ENCODE measurements at regions of chr11 and their contacts with region 1.

Region 1: DNA sequence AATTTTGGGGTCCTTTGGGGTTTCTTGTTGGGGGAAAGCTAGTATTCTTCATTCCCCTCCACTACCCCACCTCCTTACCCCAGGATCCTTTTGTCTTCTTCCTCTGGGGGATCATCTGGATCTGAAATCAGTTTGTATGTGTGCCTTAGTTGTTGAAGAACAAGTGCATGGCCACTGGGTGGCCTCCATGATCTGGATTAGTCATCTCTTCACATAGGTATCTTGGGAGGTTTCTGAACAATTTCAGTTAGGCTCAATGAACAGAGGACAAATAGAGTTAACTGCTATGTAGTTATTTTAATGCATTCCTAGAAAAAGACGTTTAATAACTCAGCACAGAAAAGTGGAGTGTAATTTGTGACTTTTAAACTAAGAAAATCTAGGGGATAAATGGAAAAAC is 7.1 kb upstream of the VWA5A start:
- DNase-seq: no peak
- H3K4me3 ChIP-seq: no peak overlapping the region
- H3K27ac ChIP-seq: no peak overlapping the region
- H3K4me1 ChIP-seq: no peaks in the 10 kb centered on the region
- H3K27me3 ChIP-seq: no peaks in the 10 kb centered on the region
- CTCF ChIP-seq: peak; percentile 16

Region 2: DNA sequence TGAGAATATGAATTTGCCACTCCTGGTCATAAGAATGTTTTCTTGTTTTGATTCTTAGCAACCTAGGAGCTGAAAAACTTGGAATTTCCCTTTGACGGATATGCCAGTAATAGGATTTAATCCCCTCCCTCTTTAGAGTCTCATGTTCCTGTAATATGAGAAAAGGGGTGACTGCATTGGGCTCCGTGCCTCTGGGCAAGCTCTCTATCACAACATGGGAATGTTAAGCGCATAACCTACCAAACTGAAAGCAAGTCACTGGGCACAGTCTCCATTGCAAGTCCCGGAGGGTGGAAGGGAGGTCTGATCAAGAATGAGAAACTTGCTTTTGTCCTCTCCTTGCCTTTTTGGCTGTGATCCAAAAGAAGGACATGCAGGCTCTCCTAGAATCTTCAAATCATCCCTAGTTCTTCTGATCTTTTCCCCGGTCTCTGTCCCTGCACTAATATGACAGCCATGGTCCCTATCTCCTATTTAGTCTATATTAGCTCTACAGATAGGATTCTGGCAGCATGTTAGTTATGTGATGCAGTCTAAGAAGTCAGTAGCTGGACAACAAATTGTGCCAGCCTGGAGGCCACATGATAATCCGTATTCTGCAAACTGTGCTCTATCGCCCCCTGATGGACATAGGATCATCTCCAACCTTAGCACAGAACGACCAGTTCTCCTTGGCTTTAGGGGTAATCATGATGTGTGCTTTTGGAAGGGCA is 86.7 kb after region 1 on chr11:
- intact Hi-C with region 1: loop called (anchors 10 kb)
- DNase-seq: peak; percentile 75
- H3K4me3 ChIP-seq: no peak overlapping the region
- H3K27ac ChIP-seq: no peak overlapping the region
- H3K4me1 ChIP-seq: no peaks in the 10 kb centered on the region
- H3K27me3 ChIP-seq: no peaks in the 10 kb centered on the region
- CTCF ChIP-seq: peak; percentile 73

Region 3: DNA sequence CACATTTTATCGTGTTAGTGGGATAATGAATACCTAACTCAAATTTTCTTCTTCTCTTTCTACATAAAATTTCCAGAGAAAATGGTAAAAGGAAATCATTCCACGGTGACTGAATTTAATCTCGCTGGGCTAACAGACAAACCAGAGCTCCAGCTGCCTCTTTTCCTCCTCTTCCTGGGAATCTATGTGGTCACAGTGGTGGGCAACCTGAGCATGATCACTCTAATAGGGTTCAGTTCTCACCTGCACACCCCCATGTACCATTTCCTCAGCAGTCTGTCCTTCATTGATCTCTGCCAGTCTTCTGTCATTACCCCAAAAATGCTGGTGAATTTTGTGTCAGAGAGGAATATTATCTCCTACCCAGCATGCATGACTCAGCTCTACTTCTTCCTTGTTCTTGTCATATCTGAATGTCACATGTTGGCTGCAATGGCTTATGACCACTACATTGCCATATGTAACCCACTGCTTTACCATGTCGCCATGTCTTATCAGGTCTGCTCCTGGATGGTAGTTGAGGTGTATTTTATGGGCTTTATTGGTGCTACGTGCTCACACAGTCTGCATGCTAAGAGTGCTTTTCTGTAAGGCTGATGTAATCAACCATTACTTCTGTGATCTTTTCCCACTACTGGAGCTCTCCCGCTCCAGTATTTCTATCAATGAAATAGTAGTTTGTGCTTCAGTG is 99.1 kb after region 1 on chr11:
- intact Hi-C with region 1: no loop called
- DNase-seq: no peak
- H3K4me3 ChIP-seq: no peak overlapping the region
- H3K27ac ChIP-seq: no peak overlapping the region
- H3K4me1 ChIP-seq: no peaks in the 10 kb centered on the region
- H3K27me3 ChIP-seq: no peaks in the 10 kb centered on the region
- CTCF ChIP-seq: no peak

Measured in colonic mucosa (tissue), 4 donors.